ENCODE measurements at regions of chr5 and their contacts with region 1.

Region 1: DNA sequence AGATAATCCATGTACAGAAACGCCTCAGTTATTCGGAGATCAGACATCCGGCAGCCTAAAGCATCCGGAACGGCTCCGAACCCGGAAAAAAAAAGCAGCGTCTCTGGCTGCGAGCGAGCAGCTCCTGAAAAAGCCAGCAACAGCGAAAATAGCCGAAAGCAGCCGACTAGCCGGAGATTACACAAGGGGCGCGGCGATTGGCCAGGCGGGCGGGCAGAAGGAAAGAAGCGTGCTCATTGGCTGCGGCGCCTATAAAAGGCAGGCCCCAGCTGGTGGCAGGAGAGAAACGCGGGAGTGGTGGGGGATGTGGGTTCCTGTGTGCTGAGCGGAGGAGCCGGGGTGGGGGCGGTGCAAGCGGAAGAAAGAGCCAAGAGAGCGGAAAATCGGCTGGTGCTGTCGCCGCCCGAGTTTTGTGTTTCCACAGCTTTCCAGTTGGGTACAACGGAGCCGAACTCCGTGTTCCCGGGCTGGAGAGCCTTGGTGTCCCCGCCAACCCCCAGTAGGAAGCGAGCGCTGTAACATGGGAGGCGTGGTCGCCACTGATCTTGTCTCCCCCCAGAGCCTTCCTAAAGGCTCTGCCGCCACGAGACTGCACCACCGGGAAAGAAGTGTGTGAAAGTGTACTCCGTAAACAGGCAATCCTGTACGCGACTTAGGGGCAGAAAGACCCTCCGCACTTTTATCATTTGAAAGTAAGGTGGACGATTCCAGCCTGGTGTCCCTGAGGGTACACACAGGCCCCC is at the start of gene ARL15:
- DNase-seq: peak; percentile 97
- H3K4me3 ChIP-seq: peak within 1 kb of the TSS; percentile 75 to 91 (median 79)
- H3K27ac ChIP-seq: peak within 1 kb of the TSS; percentile 79
- H3K4me1 ChIP-seq: peaks cover 12% of the 10 kb centered on the region
- H3K27me3 ChIP-seq: no peaks in the 10 kb centered on the region
- CTCF ChIP-seq: peak in 1 of 2 donors; percentile 1
- total RNA-seq, gene ARL15: 31.5 to 40.0 TPM

Region 2: GRCh38 chr5:54243473-54244080 is 67.0 kb before region 1 on chr5:
- CTCF ChIA-PET with region 1: interaction called, 7 read pairs
- dilution Hi-C with region 1: no loop called
- in situ Hi-C with region 1: no loop called
- intact Hi-C with region 1: loop called (anchors 1 kb)
- DNase-seq: peak; percentile 20
- H3K4me3 ChIP-seq: no peak overlapping the region
- H3K27ac ChIP-seq: no peak overlapping the region
- H3K4me1 ChIP-seq: no peaks in the 10 kb centered on the region
- H3K27me3 ChIP-seq: no peaks in the 10 kb centered on the region
- CTCF ChIP-seq: peak; percentile 72 to 81

Region 3: DNA sequence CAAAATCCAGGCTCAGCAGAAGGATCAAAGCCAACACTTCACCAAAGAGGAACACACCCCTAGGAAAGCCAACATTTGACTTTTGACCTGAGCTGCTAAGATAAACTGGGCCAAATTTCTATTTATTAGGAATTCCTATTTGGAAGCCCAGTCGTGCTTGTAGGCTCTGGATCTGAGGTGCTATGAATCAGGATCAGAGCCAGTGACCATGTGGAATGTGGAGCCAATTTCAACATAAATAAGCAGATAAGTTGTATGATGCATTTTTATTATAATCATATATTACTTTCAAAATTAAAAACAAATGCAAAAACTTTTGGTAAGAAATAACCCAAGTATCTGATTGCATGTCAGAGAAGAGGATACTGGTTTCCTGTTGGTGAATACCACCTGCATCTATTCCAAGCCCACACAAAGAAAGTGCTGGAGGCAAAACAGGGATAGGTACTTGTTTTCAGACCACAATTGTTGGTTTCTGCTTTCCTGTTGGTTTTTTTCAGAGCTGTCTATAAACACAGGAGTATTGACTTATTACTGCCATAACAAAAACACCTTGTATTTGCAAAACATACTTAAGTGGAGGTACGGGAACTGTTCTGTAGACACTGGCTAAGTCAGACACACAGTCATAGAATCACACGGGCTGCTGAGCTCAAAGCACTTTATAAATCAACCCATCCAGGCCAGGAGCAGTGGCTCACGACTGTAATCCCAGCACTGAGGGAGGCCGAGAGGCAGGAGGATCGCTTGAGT is 53.1 kb before region 1 on chr5:
- CTCF ChIA-PET with region 1: interaction called, 4 read pairs
- dilution Hi-C with region 1: no loop called
- in situ Hi-C with region 1: loop called in 1 of 2 experiments (anchors 10 kb)
- intact Hi-C with region 1: loop called (anchors 2 kb)
- DNase-seq: peak; percentile 74
- H3K4me3 ChIP-seq: no peak overlapping the region
- H3K27ac ChIP-seq: no peak overlapping the region
- H3K4me1 ChIP-seq: peaks cover 15% of the 10 kb centered on the region
- H3K27me3 ChIP-seq: no peaks in the 10 kb centered on the region
- CTCF ChIP-seq: no peak

Region 4: GRCh38 chr5:54415896-54416601 is 105.4 kb after region 1 on chr5:
- CTCF ChIA-PET with region 1: interaction called, 5 read pairs
- dilution Hi-C with region 1: no loop called
- in situ Hi-C with region 1: loop called in 1 of 2 experiments (anchors 5 kb)
- intact Hi-C with region 1: loop called (anchors 1 kb)
- DNase-seq: peak; percentile 83
- H3K4me3 ChIP-seq: no peak overlapping the region
- H3K27ac ChIP-seq: no peak overlapping the region
- H3K4me1 ChIP-seq: peaks cover 18% of the 10 kb centered on the region
- H3K27me3 ChIP-seq: no peaks in the 10 kb centered on the region
- CTCF ChIP-seq: no peak

Region 5: DNA sequence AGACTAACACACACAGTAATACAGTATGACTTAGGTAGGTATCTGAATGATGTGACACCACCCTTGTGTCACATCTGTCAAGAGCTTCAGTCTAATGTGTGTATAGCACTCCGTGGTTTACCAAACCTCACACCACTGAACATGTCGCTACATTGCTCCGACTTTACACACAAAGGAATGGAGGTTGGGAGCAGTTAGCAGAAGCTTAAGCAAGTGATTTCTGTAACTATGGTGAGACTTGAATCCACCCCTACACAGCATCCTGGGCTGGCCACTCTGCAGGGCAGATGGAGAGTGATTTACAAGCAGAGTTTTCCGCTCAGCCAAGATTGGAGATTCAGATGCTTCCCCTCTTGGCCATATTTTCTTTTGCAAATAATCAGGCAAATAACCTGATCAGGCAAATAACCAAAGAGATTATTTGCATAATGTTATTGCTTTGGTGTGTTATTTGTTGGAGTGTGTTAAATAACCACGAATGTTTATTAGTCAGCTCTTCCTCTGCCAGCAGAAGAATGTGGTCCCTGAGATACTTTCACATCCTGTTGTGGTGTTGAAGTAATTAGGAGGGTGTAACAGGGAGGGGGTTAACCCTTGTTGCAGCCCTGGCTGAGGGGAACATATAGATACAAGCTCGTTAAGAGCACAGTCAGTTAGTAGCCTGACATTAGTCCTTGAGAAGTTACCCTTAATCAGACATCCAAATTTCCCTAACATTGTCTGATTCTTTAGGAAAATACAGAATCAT is 299.8 kb after region 1 on chr5:
- CTCF ChIA-PET with region 1: no interaction called
- dilution Hi-C with region 1: no loop called
- in situ Hi-C with region 1: no loop called
- intact Hi-C with region 1: no loop called
- DNase-seq: peak; percentile 21
- H3K4me3 ChIP-seq: no peak overlapping the region
- H3K27ac ChIP-seq: no peak overlapping the region
- H3K4me1 ChIP-seq: no peaks in the 10 kb centered on the region
- H3K27me3 ChIP-seq: no peaks in the 10 kb centered on the region
- CTCF ChIP-seq: no peak

Region 6: GRCh38 chr5:54678737-54679136 is 368.1 kb after region 1 on chr5:
- CTCF ChIA-PET with region 1: interaction called, 21 read pairs
- dilution Hi-C with region 1: no loop called
- in situ Hi-C with region 1: no loop called
- intact Hi-C with region 1: no loop called
- DNase-seq: no peak
- H3K4me3 ChIP-seq: no peak overlapping the region
- H3K27ac ChIP-seq: no peak overlapping the region
- H3K4me1 ChIP-seq: no peaks in the 10 kb centered on the region
- H3K27me3 ChIP-seq: no peaks in the 10 kb centered on the region
- CTCF ChIP-seq: no peak